ENCODE measurements at regions of chr2 and their contacts with region 1.

Region 1: GRCh38 chr2:60109744-60110143 is 443.7 kb downstream of the BCL11A start:
- DNase-seq: no peak
- ATAC-seq: no peak
- H3K4me3 ChIP-seq: no peak overlapping the region
- H3K4me3 Mint-ChIP-seq: no peak overlapping the region
- H3K27ac ChIP-seq: no peak overlapping the region
- H3K27ac Mint-ChIP-seq: no peak overlapping the region
- H3K4me1 ChIP-seq: no peaks in the 10 kb centered on the region
- H3K4me1 Mint-ChIP-seq: peaks cover 16% of the 10 kb centered on the region
- H3K27me3 ChIP-seq: no peaks in the 10 kb centered on the region
- H3K27me3 Mint-ChIP-seq: no peaks in the 10 kb centered on the region
- CTCF ChIP-seq: no peak

Region 2: DNA sequence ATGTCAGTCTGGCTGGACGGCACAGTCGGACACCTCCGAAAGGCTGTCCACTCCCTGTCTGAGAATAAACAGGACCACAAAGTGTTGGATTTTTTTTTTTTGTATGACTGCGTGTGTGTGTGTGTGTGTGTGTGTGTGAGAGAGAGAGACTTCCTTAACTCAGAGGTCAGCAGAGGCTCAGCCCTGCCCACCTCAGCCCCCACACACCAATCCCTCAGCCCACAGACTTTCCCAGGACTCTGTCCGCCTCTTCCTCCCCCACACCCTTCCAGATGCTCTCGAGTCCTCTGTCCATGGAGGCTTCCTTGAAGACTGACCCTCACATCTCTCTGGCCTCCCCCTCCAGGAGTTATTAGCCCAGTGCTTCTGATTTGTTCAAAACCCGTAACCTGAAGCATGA is 296.4 kb after region 1 on chr2:
- CTCF ChIA-PET with region 1: no interaction called
- POLR2A ChIA-PET with region 1: no interaction called
- intact Hi-C with region 1: loop called in 1 of 2 experiments (anchors 5 kb)
- DNase-seq: no peak
- ATAC-seq: no peak
- H3K4me3 ChIP-seq: no peak overlapping the region
- H3K4me3 Mint-ChIP-seq: no peak overlapping the region
- H3K27ac ChIP-seq: no peak overlapping the region
- H3K27ac Mint-ChIP-seq: no peak overlapping the region
- H3K4me1 ChIP-seq: no peaks in the 10 kb centered on the region
- H3K4me1 Mint-ChIP-seq: no peaks in the 10 kb centered on the region
- H3K27me3 ChIP-seq: no peaks in the 10 kb centered on the region
- H3K27me3 Mint-ChIP-seq: peaks cover 4% of the 10 kb centered on the region
- CTCF ChIP-seq: no peak